HepG2 (cell line): ENCODE measurements at regions of chr1 and their contacts with region 1.

Region 1: DNA sequence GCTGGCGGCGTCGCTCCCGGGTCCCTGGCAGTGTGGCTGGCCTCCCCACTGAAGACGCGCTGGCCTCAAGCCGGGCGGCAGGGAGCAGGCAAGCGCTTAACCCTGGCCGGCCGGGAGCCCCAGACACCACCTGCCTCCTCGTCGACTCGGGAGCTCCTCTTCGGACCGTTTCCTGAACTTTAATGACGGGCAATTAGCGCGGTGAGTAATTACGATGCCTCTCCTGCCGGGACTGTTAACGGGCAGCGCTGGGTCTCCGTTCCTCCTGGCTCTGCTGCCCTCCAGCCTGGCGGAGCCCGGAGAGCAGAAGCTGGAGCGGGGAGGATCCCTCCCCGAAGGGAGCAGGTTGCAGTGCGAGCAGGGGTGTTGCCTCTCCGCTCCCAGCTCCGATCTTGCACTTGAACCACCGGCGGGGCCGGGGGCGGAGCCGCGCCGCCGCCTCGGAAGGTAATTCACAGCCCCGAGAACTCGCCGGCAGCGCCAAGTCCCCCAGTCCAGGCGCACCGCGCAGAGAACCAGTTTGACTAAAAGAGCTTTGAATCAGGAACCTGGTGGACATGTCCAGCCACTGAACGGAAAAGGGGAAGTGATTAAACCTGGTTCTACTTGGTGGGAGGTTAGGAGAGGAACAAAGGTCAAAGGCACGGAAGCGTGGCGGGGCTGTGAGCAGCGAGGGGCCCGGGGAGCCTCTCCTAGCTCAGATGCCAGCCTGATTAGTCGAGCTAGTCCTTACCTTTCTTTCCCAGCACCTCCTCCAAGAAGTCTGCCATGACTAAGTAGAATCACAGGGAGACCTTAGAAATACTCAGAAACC is 18.3 kb upstream of the PLEKHA6 start:
- DNase-seq: peak; percentile 69
- ATAC-seq: peak; percentile 82
- H3K4me3 ChIP-seq: peak overlapping the region; percentile 81 to 85 (median 83)
- H3K27ac ChIP-seq: peak overlapping the region; percentile 65
- H3K4me1 ChIP-seq: peaks cover 66% of the 10 kb centered on the region
- H3K27me3 ChIP-seq: no peaks in the 10 kb centered on the region; a peak in 1 of 5 replicates
- CTCF ChIP-seq: no peak
- EP300 ChIP-seq: no peak; a peak in 1 of 4 replicates
- POLR2A ChIP-seq: peak; percentile 39 to 70; a peak in 3 of 4 replicates
- RAD21 ChIP-seq: no peak

Region 2: DNA sequence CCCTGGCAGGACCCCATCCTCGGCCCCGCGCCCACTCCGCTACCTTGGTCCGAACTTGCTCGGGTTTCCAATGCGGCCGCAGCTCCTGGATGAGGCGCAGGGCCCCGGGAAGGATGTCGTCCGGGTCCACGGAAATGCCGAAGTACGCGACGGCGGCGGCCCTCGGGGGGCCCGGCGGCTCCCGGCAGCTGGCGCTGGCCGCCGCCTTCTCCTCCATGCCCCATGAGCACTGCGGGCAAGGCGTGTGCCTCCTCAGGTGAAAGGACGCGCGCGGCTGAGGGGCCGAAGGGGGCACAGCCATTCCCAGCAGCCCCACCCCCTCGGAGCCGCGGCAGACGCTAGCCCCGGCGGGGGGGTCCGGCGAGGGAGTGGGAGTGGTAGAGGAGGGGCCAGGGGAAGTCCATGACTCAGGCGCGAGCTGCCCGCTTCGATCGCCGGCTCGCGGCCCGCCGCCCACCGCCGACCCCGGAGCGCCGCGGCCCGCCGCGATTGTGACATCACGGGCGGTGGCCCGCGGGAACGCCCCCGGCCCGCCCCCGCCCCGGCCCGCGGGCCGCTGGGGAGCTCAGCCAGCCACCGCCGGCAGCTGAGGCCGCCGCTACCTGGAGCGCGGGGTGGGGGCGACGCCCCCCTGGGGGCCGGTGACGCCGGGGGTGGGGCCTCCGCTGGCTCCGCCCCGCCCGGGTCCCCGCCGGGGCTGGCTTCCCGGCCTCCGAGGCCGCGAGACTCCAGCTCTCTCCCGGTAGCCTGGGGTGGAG is 226.3 kb before region 1 on chr1 and contains the start of gene ETNK2:
- CTCF ChIA-PET with region 1: no interaction called
- POLR2A ChIA-PET with region 1: no interaction called
- in situ Hi-C with region 1: no loop called
- intact Hi-C with region 1: loop called (anchors 10 kb)
- DNase-seq: no peak
- ATAC-seq: peak; percentile 48
- H3K4me3 ChIP-seq: peak within 1 kb of the TSS; percentile 61 to 82 (median 72)
- H3K27ac ChIP-seq: peak within 1 kb of the TSS; percentile 38
- H3K4me1 ChIP-seq: peaks cover 46% of the 10 kb centered on the region
- H3K27me3 ChIP-seq: peaks cover 0 to 2% of the 10 kb centered on the region in 2 experiments; a peak in 3 of 5 replicates
- CTCF ChIP-seq: no peak; the same call in 1 of the 2 replicates
- EP300 ChIP-seq: no peak
- POLR2A ChIP-seq: peak in 1 of 2 experiments; percentile 65; a peak in 2 of 4 replicates
- RAD21 ChIP-seq: no peak
- total RNA-seq, gene ETNK2: 35.3 and 42.8 TPM in 2 replicates